ENCODE measurements at regions of chr1 and their contacts with region 1.

Region 1: DNA sequence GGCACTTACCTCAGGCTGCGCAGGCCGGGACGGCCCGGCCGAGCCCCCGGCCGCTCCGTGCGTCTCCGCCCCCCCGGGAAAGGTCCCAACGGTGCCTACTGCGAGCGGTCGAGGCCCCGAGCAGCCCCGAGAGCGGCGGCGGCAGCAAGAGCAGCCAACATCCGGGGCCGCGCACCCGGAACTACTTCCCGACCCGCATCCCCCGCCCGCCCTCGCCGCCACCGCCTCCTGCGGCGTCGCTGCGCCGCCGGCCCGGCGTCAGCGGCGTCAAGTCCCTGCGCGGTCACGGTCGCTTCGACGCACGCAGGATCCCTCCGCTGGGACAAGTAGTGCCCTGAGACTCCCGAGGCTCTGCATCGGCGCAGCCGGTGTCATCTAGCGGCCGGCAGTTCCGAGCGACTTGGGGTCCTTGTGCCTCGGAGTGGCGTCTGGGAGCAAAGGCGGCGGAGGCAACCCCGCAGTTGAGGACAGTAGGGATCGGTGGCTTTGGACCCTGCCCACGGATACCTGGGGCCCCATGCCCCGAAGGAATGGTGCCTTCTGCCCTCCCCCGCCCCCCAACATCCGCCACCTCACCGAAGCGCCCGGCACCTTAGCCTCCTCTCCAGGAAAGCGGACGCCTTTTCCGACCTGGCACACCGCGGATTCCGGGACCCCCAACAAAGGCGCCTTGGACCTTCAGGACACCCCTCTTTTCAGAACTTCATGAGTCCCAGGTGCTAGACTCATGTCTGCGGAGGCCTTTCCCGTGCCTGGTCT is at the start of gene FOXJ3:
- DNase-seq: peak; percentile 83 to 93 (median 91)
- ATAC-seq: peak; percentile 96
- H3K4me3 ChIP-seq: peak within 1 kb of the TSS; percentile 94
- H3K4me3 Mint-ChIP-seq: peak within 1 kb of the TSS; percentile 84 to 96 (median 94)
- H3K27ac ChIP-seq: peak within 1 kb of the TSS; percentile 90
- H3K27ac Mint-ChIP-seq: peak within 1 kb of the TSS; percentile 83 to 97 (median 92)
- H3K4me1 ChIP-seq: peaks cover 16 to 19% of the 10 kb centered on the region in 2 donors
- H3K4me1 Mint-ChIP-seq: peaks cover 42 to 65% (median 56%) of the 10 kb centered on the region in 7 donors
- H3K27me3 ChIP-seq: no peaks in the 10 kb centered on the region
- H3K27me3 Mint-ChIP-seq: peaks cover 0 to 3% (median 0%) of the 10 kb centered on the region in 5 donors
- total RNA-seq, gene FOXJ3: 59.5 to 93.3 (median 76.5) TPM

Region 2: DNA sequence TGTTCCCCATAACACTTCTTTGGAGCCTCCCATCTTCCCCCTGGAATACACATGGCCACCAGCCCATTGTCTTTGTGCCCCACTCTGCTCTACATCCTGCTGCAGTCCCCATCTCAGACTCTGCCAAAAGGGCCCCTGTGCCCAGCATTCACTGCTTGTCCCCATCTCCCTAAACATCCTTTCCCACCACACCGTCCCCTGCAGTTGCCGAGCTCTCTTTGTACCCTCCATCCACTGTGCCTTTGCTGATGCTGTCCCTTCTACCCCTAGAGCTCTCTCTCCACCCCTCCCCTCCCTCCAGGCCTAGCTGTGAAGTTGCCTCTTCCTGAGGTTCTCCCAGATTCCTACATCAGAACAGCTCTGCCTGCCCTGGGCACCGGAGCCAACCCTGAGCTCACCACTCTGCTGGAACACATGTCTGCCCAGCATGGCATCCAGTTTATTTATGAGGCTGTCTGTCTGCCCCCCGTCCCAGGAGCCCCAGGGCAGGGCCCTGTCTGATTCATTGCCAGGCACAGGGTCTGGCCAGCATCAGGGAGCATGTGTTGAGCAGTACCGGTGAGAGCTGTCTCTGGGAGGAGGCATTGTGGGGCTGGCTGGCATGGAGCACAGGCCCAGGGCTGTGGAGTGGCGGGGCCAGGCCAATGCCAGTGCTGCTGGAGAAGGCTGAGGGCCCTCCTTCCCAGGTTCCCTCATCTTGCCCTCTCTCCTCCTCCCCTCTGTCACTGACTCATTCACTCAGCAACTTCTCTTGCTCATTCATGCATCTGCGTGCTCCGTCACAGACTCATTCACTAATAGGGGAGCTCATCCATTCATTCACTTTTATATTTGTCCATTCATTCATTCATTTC is 879.5 kb before region 1 on chr1:
- CTCF ChIA-PET with region 1: no interaction called
- POLR2A ChIA-PET with region 1: no interaction called
- intact Hi-C with region 1: no loop called
- DNase-seq: no peak
- ATAC-seq: no peak
- H3K4me3 ChIP-seq: no peak overlapping the region
- H3K4me3 Mint-ChIP-seq: no peak overlapping the region
- H3K27ac ChIP-seq: no peak overlapping the region
- H3K27ac Mint-ChIP-seq: no peak overlapping the region
- H3K4me1 ChIP-seq: no peaks in the 10 kb centered on the region
- H3K4me1 Mint-ChIP-seq: peaks cover 0 to 2% (median 0%) of the 10 kb centered on the region in 7 donors
- H3K27me3 ChIP-seq: no peaks in the 10 kb centered on the region
- H3K27me3 Mint-ChIP-seq: peaks cover 0 to 11% (median 0%) of the 10 kb centered on the region in 5 donors

Region 3: GRCh38 chr1:42035830-42036604 is 299.2 kb before region 1 on chr1:
- CTCF ChIA-PET with region 1: no interaction called
- POLR2A ChIA-PET with region 1: no interaction called
- intact Hi-C with region 1: loop called in 1 of 2 experiments (anchors 1 kb)
- DNase-seq: peak; percentile 92 to 100 (median 96)
- ATAC-seq: peak; percentile 98
- H3K4me3 ChIP-seq: peak overlapping the region; percentile 72
- H3K4me3 Mint-ChIP-seq: peak overlapping the region in 9 of 10 donors; percentile 74 to 88 (median 84)
- H3K27ac ChIP-seq: peak overlapping the region; percentile 74
- H3K27ac Mint-ChIP-seq: peak overlapping the region in 5 of 9 donors; percentile 37 to 82 (median 65)
- H3K4me1 ChIP-seq: peaks cover 25 to 43% of the 10 kb centered on the region in 2 donors
- H3K4me1 Mint-ChIP-seq: peaks cover 23 to 45% (median 39%) of the 10 kb centered on the region in 7 donors
- H3K27me3 ChIP-seq: no peaks in the 10 kb centered on the region
- H3K27me3 Mint-ChIP-seq: peaks cover 0 to 20% (median 0%) of the 10 kb centered on the region in 5 donors

Region 4: DNA sequence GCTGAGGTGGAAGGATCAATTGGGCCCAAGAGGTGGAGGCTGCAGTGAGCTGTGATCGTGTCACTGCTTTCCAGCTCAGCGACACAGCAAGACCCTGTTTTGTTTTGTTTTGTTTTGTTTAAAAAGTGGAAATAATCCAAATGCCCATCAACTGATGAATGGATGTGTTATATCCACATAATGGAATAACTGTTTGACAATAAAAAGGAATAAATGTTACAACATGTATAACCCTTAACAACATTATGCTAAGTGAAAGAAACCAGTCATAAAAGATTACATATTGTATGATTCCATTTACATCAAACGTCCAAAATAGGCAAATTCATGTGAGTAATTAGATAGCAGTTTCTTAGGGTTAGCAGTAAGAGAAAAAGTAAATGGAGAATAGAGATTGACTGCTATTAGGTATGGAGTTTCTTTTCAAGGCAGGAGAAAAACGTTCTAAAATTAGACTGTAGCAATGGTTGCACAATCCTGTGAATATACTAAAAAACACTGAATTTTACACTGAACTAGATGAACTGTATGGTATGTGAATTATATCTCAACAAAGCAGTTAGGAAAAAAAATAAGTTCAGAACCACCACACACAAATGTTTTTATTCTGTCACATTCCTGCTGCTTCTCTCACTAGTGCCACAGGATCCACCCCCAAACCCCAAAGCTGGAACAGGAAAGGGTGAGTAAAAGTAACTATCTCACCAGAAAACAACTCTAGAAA is 15.9 kb before region 1 on chr1:
- CTCF ChIA-PET with region 1: interaction called, 9 read pairs
- POLR2A ChIA-PET with region 1: interaction called, 9 read pairs
- intact Hi-C with region 1: loop called (anchors 1 to 2 kb)
- DNase-seq: peak in 2 of 9 donors; percentile 2 to 4
- ATAC-seq: peak; percentile 46
- H3K4me3 ChIP-seq: peak overlapping the region; percentile 31
- H3K4me3 Mint-ChIP-seq: peak overlapping the region; percentile 70 to 88 (median 82)
- H3K27ac ChIP-seq: peak overlapping the region; percentile 59
- H3K27ac Mint-ChIP-seq: peak overlapping the region; percentile 66 to 93 (median 89)
- H3K4me1 ChIP-seq: peaks cover 29 to 74% of the 10 kb centered on the region in 2 donors
- H3K4me1 Mint-ChIP-seq: peaks cover 68 to 96% (median 93%) of the 10 kb centered on the region in 7 donors
- H3K27me3 ChIP-seq: no peaks in the 10 kb centered on the region
- H3K27me3 Mint-ChIP-seq: no peaks in the 10 kb centered on the region

Region 5: DNA sequence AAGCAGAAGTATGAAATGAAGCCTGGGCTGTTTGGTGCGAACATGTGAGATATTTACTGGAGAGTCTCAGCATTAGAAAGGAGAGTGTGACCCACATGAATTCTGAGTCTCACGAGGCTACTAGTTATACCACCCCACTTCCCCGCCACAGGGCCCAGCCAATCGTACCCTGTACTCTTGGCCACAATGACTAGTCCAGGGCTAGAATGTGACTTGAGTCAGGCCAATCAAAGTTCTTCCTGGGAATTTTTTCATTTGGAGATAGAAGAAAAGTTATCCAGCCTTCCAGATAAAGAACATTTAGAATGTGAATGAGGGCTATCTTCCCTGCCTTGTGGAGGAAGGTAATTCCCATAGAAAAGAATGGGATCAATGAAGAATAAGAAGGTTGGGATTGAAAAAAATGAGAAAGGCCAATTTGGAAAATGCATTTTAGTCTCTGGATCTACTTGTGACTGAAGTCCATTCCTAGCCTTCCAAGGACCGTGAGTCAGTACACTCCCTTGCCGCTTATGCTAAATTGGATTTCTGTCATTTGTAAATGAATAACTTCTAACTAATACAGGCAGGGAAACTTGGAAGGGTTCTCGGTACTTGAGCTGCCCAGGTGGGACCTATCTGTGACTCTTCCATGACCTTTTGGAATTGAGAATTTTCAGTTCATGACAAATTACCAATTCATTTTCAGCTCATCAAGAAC is 33.0 kb after region 1 on chr1:
- CTCF ChIA-PET with region 1: no interaction called
- POLR2A ChIA-PET with region 1: no interaction called
- intact Hi-C with region 1: no loop called
- DNase-seq: no peak
- ATAC-seq: no peak
- H3K4me3 ChIP-seq: no peak overlapping the region
- H3K4me3 Mint-ChIP-seq: no peak overlapping the region
- H3K27ac ChIP-seq: no peak overlapping the region
- H3K27ac Mint-ChIP-seq: no peak overlapping the region
- H3K4me1 ChIP-seq: no peaks in the 10 kb centered on the region
- H3K4me1 Mint-ChIP-seq: no peaks in the 10 kb centered on the region
- H3K27me3 ChIP-seq: no peaks in the 10 kb centered on the region
- H3K27me3 Mint-ChIP-seq: peaks cover 11 to 38% (median 18%) of the 10 kb centered on the region in 5 donors

Region 6: DNA sequence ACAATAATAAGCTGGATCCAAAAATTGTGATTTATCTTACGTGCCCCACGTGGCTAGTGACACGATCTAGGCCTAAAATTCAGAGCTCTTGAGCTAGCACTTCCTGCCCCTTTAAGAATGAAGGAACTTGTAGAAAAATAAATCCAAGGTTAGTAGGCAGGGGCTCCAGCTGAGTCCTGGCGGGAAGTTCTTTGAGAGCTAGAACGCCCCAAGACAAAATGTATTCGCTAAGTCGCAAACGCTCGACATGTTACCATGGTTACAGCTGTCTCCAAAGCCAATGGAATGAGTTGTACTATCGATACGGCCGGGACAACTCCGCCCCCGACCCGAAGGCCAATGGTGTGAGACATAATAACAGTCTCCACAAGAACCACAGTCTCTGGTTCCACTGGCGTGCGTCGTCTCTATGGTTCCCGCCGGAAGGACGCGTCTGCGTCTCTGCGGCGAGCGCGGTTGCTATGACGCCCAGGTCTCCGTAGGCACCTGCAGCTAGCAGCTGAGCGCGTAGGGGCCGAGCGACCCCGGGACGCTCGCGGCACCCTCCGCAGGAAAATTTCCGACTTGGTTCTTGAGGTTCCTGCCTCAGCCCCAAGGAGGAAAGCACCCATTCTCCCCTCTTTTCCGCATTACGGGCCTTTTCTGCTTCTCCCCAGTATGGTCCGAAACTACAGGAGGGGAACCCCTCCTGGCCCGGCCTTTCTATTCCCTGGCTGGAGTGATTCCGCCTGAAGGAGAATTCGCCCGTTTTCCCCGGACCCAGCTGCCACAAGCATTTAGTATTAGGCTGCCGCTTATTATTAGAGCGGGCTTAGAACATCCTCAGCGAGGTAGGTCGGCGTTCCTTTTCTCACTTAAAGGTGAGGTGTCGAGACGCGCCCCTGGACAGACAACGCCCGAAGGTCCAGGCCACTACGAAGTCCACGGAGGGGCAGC is 127.9 kb after region 1 on chr1 and contains the start of gene CCDC30:
- CTCF ChIA-PET with region 1: no interaction called
- POLR2A ChIA-PET with region 1: no interaction called
- intact Hi-C with region 1: loop called in 1 of 2 experiments (anchors 1 kb)
- DNase-seq: peak; percentile 75 to 99 (median 98)
- ATAC-seq: peak; percentile 99
- H3K4me3 ChIP-seq: peak within 1 kb of the TSS; percentile 50
- H3K4me3 Mint-ChIP-seq: peak within 1 kb of the TSS; percentile 74 to 92 (median 86)
- H3K27ac ChIP-seq: peak within 1 kb of the TSS; percentile 86
- H3K27ac Mint-ChIP-seq: peak within 1 kb of the TSS; percentile 87 to 98 (median 93)
- H3K4me1 ChIP-seq: peaks cover 14 to 18% of the 10 kb centered on the region in 2 donors
- H3K4me1 Mint-ChIP-seq: peaks cover 14 to 57% (median 49%) of the 10 kb centered on the region in 7 donors
- H3K27me3 ChIP-seq: no peaks in the 10 kb centered on the region
- H3K27me3 Mint-ChIP-seq: peaks cover 0 to 20% (median 0%) of the 10 kb centered on the region in 5 donors
- total RNA-seq, gene CCDC30: 2.3 to 5.3 (median 4.2) TPM

Region 7: DNA sequence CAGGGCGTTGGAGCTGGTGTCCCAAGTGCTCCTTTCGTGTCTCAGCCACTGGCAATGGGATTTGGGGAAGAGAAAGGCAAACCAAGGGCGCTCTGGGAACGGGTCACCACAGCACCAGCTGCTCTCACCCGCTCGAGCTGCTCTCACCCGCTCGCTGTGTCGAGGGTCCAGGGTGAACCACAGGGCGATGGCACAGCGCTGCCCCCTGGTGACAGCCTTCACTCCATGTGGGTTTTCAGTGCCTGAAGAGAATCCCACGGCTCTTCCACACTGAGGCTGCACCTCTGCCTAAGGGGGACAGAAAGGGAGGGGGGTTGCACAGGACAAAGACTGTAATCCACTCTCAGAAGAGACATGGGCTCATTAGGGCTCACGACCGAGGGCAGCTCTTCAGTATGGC is 411.9 kb after region 1 on chr1:
- CTCF ChIA-PET with region 1: no interaction called
- POLR2A ChIA-PET with region 1: no interaction called
- intact Hi-C with region 1: loop called in 1 of 2 experiments (anchors 10 kb)
- DNase-seq: peak in 6 of 9 donors; percentile 19 to 56 (median 38)
- ATAC-seq: peak; percentile 73
- H3K4me3 ChIP-seq: no peak overlapping the region
- H3K4me3 Mint-ChIP-seq: no peak overlapping the region
- H3K27ac ChIP-seq: no peak overlapping the region
- H3K27ac Mint-ChIP-seq: peak overlapping the region in 1 of 9 donors; percentile 28
- H3K4me1 ChIP-seq: no peaks in the 10 kb centered on the region
- H3K4me1 Mint-ChIP-seq: peaks cover 0 to 3% (median 0%) of the 10 kb centered on the region in 7 donors
- H3K27me3 ChIP-seq: no peaks in the 10 kb centered on the region
- H3K27me3 Mint-ChIP-seq: no peaks in the 10 kb centered on the region